ENCODE measurements at regions of chr1 and their contacts with region 1.

Region 1: GRCh38 chr1:154558575-154559465 is at the start of gene UBE2Q1:
- DNase-seq: peak; percentile 91 to 94
- H3K4me3 ChIP-seq: peak within 1 kb of the TSS; percentile 52 to 92 (median 82)
- H3K27ac ChIP-seq: peak within 1 kb of the TSS; percentile 42
- H3K4me1 ChIP-seq: peaks cover 5 to 14% (median 7%) of the 10 kb centered on the region in 4 experiments; a peak in 5 of 7 replicates
- H3K27me3 ChIP-seq: no peaks in the 10 kb centered on the region
- CTCF ChIP-seq: no peak
- EP300 ChIP-seq: no peak; a peak in 1 of 3 replicates
- POLR2A ChIP-seq: no peak; a peak in 1 of 3 replicates
- RAD21 ChIP-seq: no peak
- total RNA-seq, gene UBE2Q1: 71.7 and 95.8 TPM in 2 replicates

Region 2: GRCh38 chr1:154288661-154289060 is 270.2 kb before region 1 on chr1:
- CTCF ChIA-PET with region 1: no interaction called
- POLR2A ChIA-PET with region 1: no interaction called
- DNase-seq: no peak
- H3K4me3 ChIP-seq: no peak overlapping the region
- H3K27ac ChIP-seq: no peak overlapping the region
- H3K4me1 ChIP-seq: no peaks in the 10 kb centered on the region
- H3K27me3 ChIP-seq: no peaks in the 10 kb centered on the region
- CTCF ChIP-seq: no peak
- EP300 ChIP-seq: no peak
- POLR2A ChIP-seq: no peak
- RAD21 ChIP-seq: no peak

Region 3: GRCh38 chr1:154520333-154520732 is 38.5 kb before region 1 on chr1:
- CTCF ChIA-PET with region 1: no interaction called
- POLR2A ChIA-PET with region 1: no interaction called
- DNase-seq: no peak
- H3K4me3 ChIP-seq: no peak overlapping the region
- H3K27ac ChIP-seq: no peak overlapping the region
- H3K4me1 ChIP-seq: no peaks in the 10 kb centered on the region; a peak in 1 of 7 replicates
- H3K27me3 ChIP-seq: peaks cover 0 to 3% (median 0%) of the 10 kb centered on the region in 4 experiments; a peak in 1 of 7 replicates
- CTCF ChIP-seq: no peak
- EP300 ChIP-seq: no peak
- POLR2A ChIP-seq: no peak
- RAD21 ChIP-seq: no peak

Region 4: GRCh38 chr1:154574716-154575115 is 15.9 kb after region 1 on chr1:
- CTCF ChIA-PET with region 1: interaction called, 15 read pairs
- POLR2A ChIA-PET with region 1: interaction called, 4 read pairs
- DNase-seq: no peak
- H3K4me3 ChIP-seq: no peak overlapping the region
- H3K27ac ChIP-seq: no peak overlapping the region
- H3K4me1 ChIP-seq: peaks cover 0 to 3% (median 1%) of the 10 kb centered on the region in 4 experiments; a peak in 2 of 7 replicates
- H3K27me3 ChIP-seq: no peaks in the 10 kb centered on the region
- CTCF ChIP-seq: no peak
- EP300 ChIP-seq: no peak
- POLR2A ChIP-seq: no peak
- RAD21 ChIP-seq: no peak

Measured in H1 (cell line).